ENCODE measurements at regions of chr4 and their contacts with region 1.

Region 1: DNA sequence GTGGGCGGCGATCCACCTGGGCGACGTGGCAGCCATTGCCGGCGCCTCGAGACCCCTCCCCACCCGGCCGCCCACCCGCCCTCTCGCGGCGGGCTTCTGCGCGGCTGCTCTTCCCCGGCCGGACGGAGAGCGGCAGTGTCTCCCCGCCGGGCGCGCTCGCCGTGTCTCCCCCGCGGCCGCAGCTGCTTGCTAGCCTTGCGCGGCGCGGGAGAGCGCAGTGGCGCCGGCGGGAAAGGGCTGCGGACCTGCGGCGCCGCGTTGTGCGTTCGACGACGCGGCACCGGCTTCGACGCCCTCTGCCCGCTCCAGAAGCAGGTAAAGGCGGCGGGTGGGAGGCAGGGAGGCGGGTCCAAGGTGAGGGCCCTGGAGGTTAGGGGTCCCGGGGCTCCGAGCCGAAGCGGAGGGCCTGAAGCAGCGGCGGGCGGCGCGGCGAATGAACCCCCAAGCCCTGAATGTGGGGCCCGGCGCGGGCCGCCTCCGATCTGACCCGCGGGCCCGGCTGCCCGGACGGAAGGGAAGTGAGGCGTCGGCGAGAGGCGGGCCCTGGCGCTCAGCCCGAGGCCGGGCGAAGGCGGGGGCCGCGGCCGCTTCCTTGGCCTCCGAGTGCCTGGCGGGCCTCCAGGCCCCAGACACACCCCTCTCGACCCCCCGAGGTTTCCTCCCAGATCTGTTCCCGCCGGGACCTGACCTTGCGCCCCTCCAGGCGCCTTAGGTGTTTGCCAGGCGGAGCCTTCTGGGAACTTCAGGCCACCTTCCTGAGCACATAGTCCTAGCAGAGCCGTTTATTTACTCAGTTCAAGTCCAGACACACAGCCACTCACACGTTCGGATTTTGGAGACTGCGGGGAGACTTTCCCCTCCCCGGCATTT is at the start of gene N4BP2:
- DNase-seq: peak; percentile 82
- H3K4me3 ChIP-seq: peak within 1 kb of the TSS; percentile 85 to 96 (median 90)
- H3K27ac ChIP-seq: peak within 1 kb of the TSS; percentile 99 to 100 (median 100)
- H3K4me1 ChIP-seq: peaks cover 15 to 33% (median 22%) of the 10 kb centered on the region in 4 donors
- H3K27me3 ChIP-seq: no peaks in the 10 kb centered on the region
- CTCF ChIP-seq: peak in 4 of 5 experiments; percentile 58 to 82 (median 67)
- EP300 ChIP-seq: no peak
- POLR2A ChIP-seq: peak; percentile 86
- total RNA-seq, gene N4BP2: 7.9 to 19.5 (median 12.5) TPM

Region 2: DNA sequence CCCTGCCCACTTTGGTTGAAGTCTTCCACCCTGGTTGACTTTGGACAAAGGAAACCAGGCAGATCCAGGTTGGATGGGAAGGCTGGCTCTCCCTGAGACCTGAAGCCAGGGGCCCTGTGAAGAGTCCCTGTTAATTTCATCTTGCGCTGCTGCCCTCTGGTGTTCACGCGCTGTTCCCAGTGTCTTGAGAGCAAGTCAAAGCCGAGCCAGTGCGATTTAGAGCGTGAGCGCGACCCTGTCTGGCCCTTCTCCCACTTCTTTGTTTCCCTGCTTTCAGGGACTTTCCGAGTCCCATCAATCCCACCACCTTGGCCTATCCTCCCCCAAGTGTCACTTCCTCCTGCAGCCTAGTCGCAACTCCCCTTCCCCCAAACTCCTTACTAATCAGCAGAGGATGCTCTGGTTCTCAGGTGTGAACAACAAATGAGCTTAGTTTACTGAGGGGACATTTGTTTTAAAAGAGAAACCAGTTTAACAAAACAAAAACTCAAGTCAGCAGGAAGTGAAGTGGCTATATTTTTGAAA is 252.4 kb after region 1 on chr4:
- in situ Hi-C with region 1: loop called in 2 of 4 experiments (anchors 10 to 25 kb)
- intact Hi-C with region 1: no loop called
- DNase-seq: peak; percentile 94
- H3K4me3 ChIP-seq: no peak overlapping the region
- H3K27ac ChIP-seq: peak overlapping the region in 3 of 4 donors; percentile 57 to 67 (median 65)
- H3K4me1 ChIP-seq: peaks cover 0 to 21% (median 5%) of the 10 kb centered on the region in 4 donors
- H3K27me3 ChIP-seq: no peaks in the 10 kb centered on the region
- CTCF ChIP-seq: peak; percentile 85 to 89 (median 86)
- EP300 ChIP-seq: no peak
- POLR2A ChIP-seq: no peak

Region 3: DNA sequence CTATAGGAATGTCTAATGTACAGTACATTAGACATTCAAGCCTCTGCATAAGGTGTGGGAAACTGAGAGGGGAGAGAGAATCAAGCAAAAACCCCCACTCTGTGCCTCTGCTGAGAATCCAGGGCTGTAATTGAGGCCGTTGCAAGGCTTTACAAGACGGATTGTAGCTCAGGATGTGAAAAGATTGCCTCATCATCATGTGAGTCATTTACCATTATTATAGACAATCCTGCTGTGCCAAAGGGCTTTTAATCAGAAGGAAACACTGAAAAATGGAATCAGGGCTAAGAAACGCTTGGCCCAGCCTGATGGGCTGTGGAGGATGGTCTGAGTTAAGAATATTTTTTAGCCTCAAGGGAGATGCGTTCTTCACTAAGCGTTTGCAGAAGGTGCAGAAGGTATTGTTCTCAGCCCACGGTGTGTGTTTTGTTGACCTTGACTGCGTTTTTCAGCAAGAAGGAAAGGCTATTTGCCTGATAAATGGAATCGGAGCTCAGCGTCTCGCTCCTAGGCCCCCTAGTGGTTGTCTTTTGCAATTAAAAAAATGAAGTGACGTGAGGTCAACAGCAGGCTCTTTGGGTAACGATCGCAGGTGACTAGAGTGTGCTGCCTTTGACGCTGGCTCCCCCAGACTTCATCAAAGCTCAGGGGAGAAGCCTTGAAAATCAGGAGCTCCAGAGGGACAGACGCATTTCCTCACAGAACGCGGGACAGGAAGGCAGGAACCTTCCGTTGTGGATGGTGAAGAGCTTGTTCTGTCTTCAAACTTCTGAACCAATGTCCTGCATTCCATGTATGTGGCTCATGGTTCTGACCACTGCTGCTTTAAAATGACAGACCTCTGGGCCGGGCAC is 260.1 kb after region 1 on chr4:
- in situ Hi-C with region 1: loop called in 2 of 4 experiments (anchors 10 to 25 kb)
- intact Hi-C with region 1: no loop called
- DNase-seq: peak; percentile 65
- H3K4me3 ChIP-seq: peak overlapping the region in 2 of 4 donors; percentile 7 to 42
- H3K27ac ChIP-seq: peak overlapping the region; percentile 65 to 78 (median 71)
- H3K4me1 ChIP-seq: peaks cover 0 to 22% (median 12%) of the 10 kb centered on the region in 4 donors
- H3K27me3 ChIP-seq: no peaks in the 10 kb centered on the region
- CTCF ChIP-seq: peak; percentile 77 to 88 (median 85)
- EP300 ChIP-seq: no peak
- POLR2A ChIP-seq: no peak